Caco-2 (cell line): ENCODE measurements at regions of chr1 and their contacts with region 1.

Region 1: GRCh38 chr1:176897350-176898236 is 266.9 kb downstream of the ASTN1 start:
- DNase-seq: peak; percentile 53 to 59
- H3K4me3 ChIP-seq: no peak overlapping the region
- H3K4me3 Mint-ChIP-seq: no peak overlapping the region
- H3K27ac Mint-ChIP-seq: no peak overlapping the region
- H3K4me1 ChIP-seq: no peaks in the 10 kb centered on the region
- H3K4me1 Mint-ChIP-seq: peaks cover 7% of the 10 kb centered on the region
- H3K27me3 ChIP-seq: no peaks in the 10 kb centered on the region; the same call in none of the 2 replicates
- H3K27me3 Mint-ChIP-seq: peaks cover 17% of the 10 kb centered on the region
- CTCF ChIP-seq: peak; percentile 65 to 70

Region 2: DNA sequence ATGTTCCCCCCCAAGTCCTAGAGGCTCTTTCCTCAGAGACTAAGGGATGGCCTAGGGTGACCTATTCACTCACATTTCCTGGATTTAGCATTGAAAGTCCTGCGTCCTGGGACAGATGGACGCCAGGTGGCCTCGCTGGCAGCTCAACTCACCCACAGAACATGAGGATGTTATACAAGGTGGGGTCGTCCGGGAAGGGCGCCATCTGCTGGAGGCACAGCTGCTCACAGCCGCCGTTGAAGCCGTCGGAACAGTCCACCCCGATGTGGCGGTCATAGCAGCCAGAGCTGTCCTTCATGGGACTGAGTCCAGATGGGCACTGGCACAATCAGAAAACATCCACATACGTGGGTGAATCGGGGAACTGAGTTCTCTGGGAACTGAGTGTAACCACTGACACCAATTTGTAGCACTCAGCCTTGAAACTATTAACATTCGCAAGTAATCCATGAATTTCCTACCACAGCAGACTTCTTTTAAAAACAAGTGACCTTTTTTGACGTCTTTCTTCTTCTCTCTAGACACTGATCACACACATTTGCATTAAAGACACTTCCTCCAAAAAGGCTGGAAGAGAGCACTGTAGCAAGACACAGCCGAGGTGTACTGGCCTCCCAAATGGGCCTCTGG is 51.6 kb after region 1 on chr1:
- CTCF ChIA-PET with region 1: interaction called, 3 read pairs
- POLR2A ChIA-PET with region 1: no interaction called
- intact Hi-C with region 1: loop called (anchors 1 kb)
- DNase-seq: peak; percentile 76 to 79
- H3K4me3 ChIP-seq: no peak overlapping the region
- H3K4me3 Mint-ChIP-seq: no peak overlapping the region
- H3K27ac Mint-ChIP-seq: no peak overlapping the region
- H3K4me1 ChIP-seq: no peaks in the 10 kb centered on the region
- H3K4me1 Mint-ChIP-seq: no peaks in the 10 kb centered on the region
- H3K27me3 ChIP-seq: no peaks in the 10 kb centered on the region
- H3K27me3 Mint-ChIP-seq: peaks cover 6% of the 10 kb centered on the region
- CTCF ChIP-seq: peak; percentile 68 to 83

Region 3: GRCh38 chr1:177181631-177182291 is 284.2 kb after region 1 on chr1:
- CTCF ChIA-PET with region 1: interaction called, 7 read pairs
- POLR2A ChIA-PET with region 1: no interaction called
- intact Hi-C with region 1: loop called (anchors 1 kb)
- DNase-seq: peak; percentile 66 to 81
- H3K4me3 ChIP-seq: no peak overlapping the region
- H3K4me3 Mint-ChIP-seq: peak overlapping the region; percentile 55
- H3K27ac Mint-ChIP-seq: no peak overlapping the region
- H3K4me1 ChIP-seq: no peaks in the 10 kb centered on the region
- H3K4me1 Mint-ChIP-seq: peaks cover 8% of the 10 kb centered on the region
- H3K27me3 ChIP-seq: no peaks in the 10 kb centered on the region; the same call in 1 of the 2 replicates
- H3K27me3 Mint-ChIP-seq: peaks cover 15% of the 10 kb centered on the region
- CTCF ChIP-seq: peak; percentile 79 to 85

Region 4: GRCh38 chr1:177256153-177257075 is 358.8 kb after region 1 on chr1:
- CTCF ChIA-PET with region 1: no interaction called
- POLR2A ChIA-PET with region 1: no interaction called
- intact Hi-C with region 1: loop called (anchors 5 kb)
- DNase-seq: peak in 1 of 2 experiments; percentile 41
- H3K4me3 ChIP-seq: no peak overlapping the region
- H3K4me3 Mint-ChIP-seq: no peak overlapping the region
- H3K27ac Mint-ChIP-seq: no peak overlapping the region
- H3K4me1 ChIP-seq: no peaks in the 10 kb centered on the region
- H3K4me1 Mint-ChIP-seq: no peaks in the 10 kb centered on the region
- H3K27me3 ChIP-seq: no peaks in the 10 kb centered on the region
- H3K27me3 Mint-ChIP-seq: no peaks in the 10 kb centered on the region
- CTCF ChIP-seq: no peak

Region 5: DNA sequence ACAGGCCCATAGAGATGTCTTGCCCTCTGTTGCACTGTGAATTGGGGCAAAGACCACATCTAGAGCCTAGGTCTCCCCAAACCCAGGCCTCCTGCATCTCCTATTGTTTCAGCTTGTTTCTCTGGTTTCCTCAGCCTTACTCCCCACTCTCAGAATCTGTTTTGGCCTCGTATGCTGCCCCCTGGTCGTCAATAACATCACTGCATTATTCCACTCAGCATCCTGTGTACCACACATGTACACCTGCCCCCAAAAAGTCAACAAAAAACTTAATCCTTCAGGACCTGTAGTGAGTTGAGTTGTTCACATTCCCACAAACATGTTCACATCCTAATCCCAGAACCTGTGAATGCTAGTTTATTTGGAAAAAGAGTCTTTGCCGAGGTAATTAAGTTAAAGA is 458.0 kb after region 1 on chr1:
- CTCF ChIA-PET with region 1: no interaction called
- POLR2A ChIA-PET with region 1: no interaction called
- intact Hi-C with region 1: loop called (anchors 1 kb)
- DNase-seq: peak in 1 of 2 experiments; percentile 38
- H3K4me3 ChIP-seq: no peak overlapping the region
- H3K4me3 Mint-ChIP-seq: no peak overlapping the region
- H3K27ac Mint-ChIP-seq: no peak overlapping the region
- H3K4me1 ChIP-seq: no peaks in the 10 kb centered on the region
- H3K4me1 Mint-ChIP-seq: no peaks in the 10 kb centered on the region
- H3K27me3 ChIP-seq: no peaks in the 10 kb centered on the region
- H3K27me3 Mint-ChIP-seq: peaks cover 7% of the 10 kb centered on the region
- CTCF ChIP-seq: peak; percentile 14 to 64

Region 6: DNA sequence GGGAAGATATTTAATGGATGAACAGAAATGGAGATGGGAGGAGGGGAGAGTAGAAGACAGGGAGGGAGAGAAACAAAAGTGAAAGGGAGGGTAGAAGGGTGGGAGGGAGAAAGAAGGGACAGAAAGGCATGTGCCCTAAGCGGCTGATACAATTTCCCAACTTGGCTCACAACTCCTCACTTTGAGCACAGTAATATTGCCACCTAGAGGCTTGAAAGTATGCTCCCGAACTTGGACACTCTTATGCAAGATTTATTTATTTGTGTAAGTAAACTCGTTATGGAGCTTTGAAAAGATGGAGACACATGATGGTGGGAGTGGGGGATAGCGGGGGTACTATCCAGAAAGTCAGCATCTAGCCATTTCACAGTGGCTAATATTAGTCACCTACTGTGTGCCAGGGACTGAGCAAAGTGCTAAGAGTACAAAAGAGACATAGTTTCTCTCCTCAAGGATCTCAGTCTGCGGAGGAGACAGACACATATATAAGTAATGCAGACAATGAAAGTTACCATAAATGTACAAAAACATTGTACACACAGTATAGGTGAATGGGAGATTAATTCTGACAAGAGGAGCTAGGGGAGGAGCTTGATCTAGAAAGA is 882.6 kb after region 1 on chr1:
- CTCF ChIA-PET with region 1: interaction called, 5 read pairs
- POLR2A ChIA-PET with region 1: no interaction called
- intact Hi-C with region 1: loop called (anchors 1 kb)
- DNase-seq: peak in 1 of 2 experiments; percentile 42
- H3K4me3 ChIP-seq: no peak overlapping the region
- H3K4me3 Mint-ChIP-seq: no peak overlapping the region
- H3K27ac Mint-ChIP-seq: no peak overlapping the region
- H3K4me1 ChIP-seq: no peaks in the 10 kb centered on the region
- H3K4me1 Mint-ChIP-seq: no peaks in the 10 kb centered on the region
- H3K27me3 ChIP-seq: no peaks in the 10 kb centered on the region; the same call in 1 of the 2 replicates
- H3K27me3 Mint-ChIP-seq: peaks cover 14% of the 10 kb centered on the region
- CTCF ChIP-seq: peak; percentile 60 to 66

Region 7: DNA sequence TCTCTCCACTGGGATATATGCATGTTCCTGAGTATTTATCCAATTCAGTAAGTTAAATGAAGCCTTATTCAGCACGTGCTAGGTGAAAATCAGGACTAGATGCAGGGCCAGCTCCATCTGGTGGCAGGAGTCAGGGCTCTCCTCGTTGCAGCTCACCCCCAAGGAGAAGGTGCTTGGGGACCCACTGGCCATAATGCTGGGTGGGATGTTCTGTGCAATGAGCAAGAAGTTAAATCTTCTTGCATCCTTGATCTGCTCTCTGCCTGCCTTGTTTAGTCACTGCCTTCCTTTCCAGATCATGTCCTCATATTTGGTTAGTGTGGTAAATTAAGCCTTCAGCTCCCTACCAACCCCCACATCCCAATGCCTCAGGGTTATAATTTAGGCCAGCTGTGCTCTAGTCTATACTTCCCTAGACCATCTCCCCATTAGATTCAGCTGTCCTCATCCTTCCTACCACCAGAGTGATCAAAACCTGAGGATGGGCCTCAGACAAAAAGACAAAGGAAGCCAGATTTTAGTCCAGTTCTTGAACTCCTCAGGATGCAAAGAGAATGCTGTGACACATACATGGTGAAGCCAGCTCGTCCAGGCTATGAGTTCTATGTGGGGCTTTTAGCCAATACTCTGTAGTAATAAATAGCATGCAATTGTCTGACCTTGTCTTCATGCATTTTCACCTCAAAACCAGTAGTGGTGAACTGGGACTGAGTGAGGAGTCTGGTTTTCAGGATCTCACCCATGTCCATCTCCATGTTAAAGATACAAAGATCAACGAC is 1016.4 kb after region 1 on chr1:
- CTCF ChIA-PET with region 1: no interaction called
- POLR2A ChIA-PET with region 1: no interaction called
- intact Hi-C with region 1: loop called (anchors 10 kb)
- DNase-seq: peak; percentile 50
- H3K4me3 ChIP-seq: no peak overlapping the region
- H3K4me3 Mint-ChIP-seq: no peak overlapping the region
- H3K27ac Mint-ChIP-seq: no peak overlapping the region
- H3K4me1 ChIP-seq: no peaks in the 10 kb centered on the region
- H3K4me1 Mint-ChIP-seq: no peaks in the 10 kb centered on the region
- H3K27me3 ChIP-seq: no peaks in the 10 kb centered on the region
- H3K27me3 Mint-ChIP-seq: peaks cover 4% of the 10 kb centered on the region
- CTCF ChIP-seq: peak; percentile 46 to 79